H1 (cell line): ENCODE measurements at regions of chr12 and their contacts with region 1.

Region 1: GRCh38 chr12:52372216-52373154 is 5.2 kb upstream of the KRT85 start:
- DNase-seq: peak; percentile 57 to 84
- H3K4me3 ChIP-seq: no peak overlapping the region
- H3K27ac ChIP-seq: no peak overlapping the region
- H3K4me1 ChIP-seq: no peaks in the 10 kb centered on the region
- H3K27me3 ChIP-seq: no peaks in the 10 kb centered on the region
- CTCF ChIP-seq: peak; percentile 79 to 96 (median 94)
- EP300 ChIP-seq: no peak
- POLR2A ChIP-seq: no peak
- RAD21 ChIP-seq: peak; percentile 95 to 97

Region 2: GRCh38 chr12:52247228-52247892 is 125.1 kb before region 1 on chr12:
- CTCF ChIA-PET with region 1: no interaction called
- POLR2A ChIA-PET with region 1: no interaction called
- DNase-seq: no peak
- H3K4me3 ChIP-seq: no peak overlapping the region
- H3K27ac ChIP-seq: no peak overlapping the region
- H3K4me1 ChIP-seq: peaks cover 0 to 12% (median 5%) of the 10 kb centered on the region in 4 experiments; a peak in 5 of 7 replicates
- H3K27me3 ChIP-seq: peaks cover 4 to 28% (median 22%) of the 10 kb centered on the region in 4 experiments
- CTCF ChIP-seq: no peak
- EP300 ChIP-seq: no peak
- POLR2A ChIP-seq: no peak
- RAD21 ChIP-seq: no peak

Region 3: DNA sequence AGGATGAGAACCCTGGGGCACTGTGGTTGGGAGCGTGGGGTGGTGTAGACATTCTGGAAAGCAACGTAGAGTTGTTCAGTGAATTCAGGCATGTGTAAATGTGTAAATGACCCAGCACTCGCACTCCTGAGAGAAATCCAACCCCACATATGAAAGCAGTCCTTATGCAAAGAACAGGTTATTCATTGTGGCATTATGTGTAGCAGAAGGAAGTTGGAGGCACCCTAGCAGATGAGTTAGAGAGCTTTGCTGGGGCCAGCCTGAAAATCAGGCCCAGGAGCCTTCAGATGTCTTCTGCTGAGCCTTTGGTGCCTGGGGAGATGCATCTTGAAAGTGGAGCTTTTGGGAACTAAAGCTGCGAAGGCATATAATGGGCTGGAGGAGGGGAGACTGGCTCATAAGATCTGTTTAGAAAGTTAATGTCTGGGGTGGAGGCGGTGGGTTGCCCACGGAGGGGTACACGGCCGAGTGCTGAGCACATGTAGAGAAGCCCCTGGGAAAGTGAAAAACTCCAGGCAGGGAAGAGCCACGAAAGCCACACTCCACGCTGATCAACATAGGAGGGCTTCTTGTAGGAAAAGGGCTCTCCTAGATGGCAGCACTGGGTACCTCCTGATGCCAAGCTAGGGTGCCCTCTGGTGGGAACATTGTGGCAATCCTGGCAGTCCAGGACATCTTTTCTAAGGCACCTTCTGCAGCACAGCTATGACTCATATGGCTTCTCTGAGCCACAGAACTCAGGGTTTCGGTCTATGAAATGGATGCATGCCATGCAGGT is 45.2 kb before region 1 on chr12:
- CTCF ChIA-PET with region 1: interaction called, 17 read pairs
- POLR2A ChIA-PET with region 1: no interaction called
- DNase-seq: peak; percentile 67 to 75
- H3K4me3 ChIP-seq: no peak overlapping the region
- H3K27ac ChIP-seq: no peak overlapping the region
- H3K4me1 ChIP-seq: no peaks in the 10 kb centered on the region
- H3K27me3 ChIP-seq: no peaks in the 10 kb centered on the region
- CTCF ChIP-seq: peak; percentile 97 to 100 (median 100)
- EP300 ChIP-seq: no peak
- POLR2A ChIP-seq: no peak
- RAD21 ChIP-seq: peak; percentile 81 to 88

Region 4: GRCh38 chr12:52344137-52344536 is 28.3 kb before region 1 on chr12:
- CTCF ChIA-PET with region 1: interaction called, 15 read pairs
- POLR2A ChIA-PET with region 1: no interaction called
- DNase-seq: no peak
- H3K4me3 ChIP-seq: no peak overlapping the region
- H3K27ac ChIP-seq: no peak overlapping the region
- H3K4me1 ChIP-seq: no peaks in the 10 kb centered on the region
- H3K27me3 ChIP-seq: no peaks in the 10 kb centered on the region
- CTCF ChIP-seq: no peak
- EP300 ChIP-seq: no peak
- POLR2A ChIP-seq: no peak
- RAD21 ChIP-seq: no peak; a peak in 1 of 4 replicates

Region 5: DNA sequence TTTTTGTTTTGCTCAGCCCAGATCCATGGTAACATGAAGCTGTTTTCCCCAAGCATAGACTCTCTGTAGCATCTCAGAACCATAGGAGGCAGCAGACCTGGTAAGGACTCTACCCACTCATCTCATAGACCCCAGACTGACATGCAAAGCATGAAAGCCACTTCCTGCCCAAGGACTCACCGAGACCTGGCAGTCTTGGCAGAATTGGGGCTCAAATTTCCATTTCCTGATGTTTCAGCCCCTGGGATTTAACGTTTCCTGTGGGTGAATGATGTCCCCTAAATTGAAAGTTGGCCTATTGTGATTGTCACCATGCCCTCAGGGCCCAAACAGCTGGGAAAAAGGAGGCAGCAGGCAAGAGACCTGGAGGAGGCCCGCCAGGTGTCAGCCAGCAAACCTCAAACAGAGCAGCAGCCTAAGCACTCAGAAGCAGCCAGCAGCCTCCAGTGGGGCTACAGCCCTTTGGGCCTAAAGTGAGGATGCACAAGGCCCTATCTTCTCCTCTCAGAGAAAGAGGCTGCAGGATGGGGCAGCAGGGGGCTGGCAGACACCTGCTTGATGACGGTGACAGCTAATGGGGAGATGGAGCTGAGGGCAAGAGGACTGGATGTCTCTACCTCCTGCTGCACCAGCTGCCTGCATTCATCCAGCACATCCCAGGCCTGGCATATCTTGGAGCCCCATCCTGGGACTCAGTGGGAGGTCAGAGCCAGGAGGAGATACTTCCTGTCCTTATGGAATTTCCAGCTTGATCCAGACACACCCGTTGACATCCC is 13.7 kb before region 1 on chr12:
- CTCF ChIA-PET with region 1: interaction called, 63 read pairs
- POLR2A ChIA-PET with region 1: no interaction called
- DNase-seq: no peak
- H3K4me3 ChIP-seq: no peak overlapping the region
- H3K27ac ChIP-seq: no peak overlapping the region
- H3K4me1 ChIP-seq: no peaks in the 10 kb centered on the region
- H3K27me3 ChIP-seq: no peaks in the 10 kb centered on the region
- CTCF ChIP-seq: no peak
- EP300 ChIP-seq: no peak
- POLR2A ChIP-seq: no peak
- RAD21 ChIP-seq: no peak

Region 6: DNA sequence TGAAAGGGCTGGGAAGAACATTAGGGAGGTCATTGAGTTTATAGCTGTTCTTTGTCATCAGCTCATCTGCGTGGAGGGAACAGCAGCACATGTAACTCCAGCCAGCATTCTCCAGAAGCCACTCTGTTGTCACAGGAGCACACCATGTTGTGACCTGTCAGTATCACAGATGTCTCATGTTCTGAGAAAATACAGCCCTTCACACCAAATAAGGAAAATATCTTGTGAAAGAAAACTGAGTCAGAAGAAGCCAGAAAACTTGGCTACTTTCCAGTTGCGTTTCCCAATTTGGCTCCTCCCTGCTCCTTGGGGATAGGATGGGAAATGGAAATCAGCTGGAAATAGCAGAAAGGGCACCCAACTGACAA is 43.9 kb after region 1 on chr12:
- CTCF ChIA-PET with region 1: no interaction called
- POLR2A ChIA-PET with region 1: no interaction called
- DNase-seq: no peak
- H3K4me3 ChIP-seq: no peak overlapping the region
- H3K27ac ChIP-seq: no peak overlapping the region
- H3K4me1 ChIP-seq: no peaks in the 10 kb centered on the region
- H3K27me3 ChIP-seq: no peaks in the 10 kb centered on the region
- CTCF ChIP-seq: no peak
- EP300 ChIP-seq: no peak
- POLR2A ChIP-seq: no peak
- RAD21 ChIP-seq: no peak

Region 7: GRCh38 chr12:52454411-52455216 is 82.1 kb after region 1 on chr12:
- CTCF ChIA-PET with region 1: no interaction called
- POLR2A ChIA-PET with region 1: no interaction called
- DNase-seq: no peak
- H3K4me3 ChIP-seq: no peak overlapping the region; a peak in 1 of 8 replicates
- H3K27ac ChIP-seq: no peak overlapping the region
- H3K4me1 ChIP-seq: no peaks in the 10 kb centered on the region
- H3K27me3 ChIP-seq: no peaks in the 10 kb centered on the region
- CTCF ChIP-seq: no peak
- EP300 ChIP-seq: no peak
- POLR2A ChIP-seq: no peak
- RAD21 ChIP-seq: no peak

Region 8: DNA sequence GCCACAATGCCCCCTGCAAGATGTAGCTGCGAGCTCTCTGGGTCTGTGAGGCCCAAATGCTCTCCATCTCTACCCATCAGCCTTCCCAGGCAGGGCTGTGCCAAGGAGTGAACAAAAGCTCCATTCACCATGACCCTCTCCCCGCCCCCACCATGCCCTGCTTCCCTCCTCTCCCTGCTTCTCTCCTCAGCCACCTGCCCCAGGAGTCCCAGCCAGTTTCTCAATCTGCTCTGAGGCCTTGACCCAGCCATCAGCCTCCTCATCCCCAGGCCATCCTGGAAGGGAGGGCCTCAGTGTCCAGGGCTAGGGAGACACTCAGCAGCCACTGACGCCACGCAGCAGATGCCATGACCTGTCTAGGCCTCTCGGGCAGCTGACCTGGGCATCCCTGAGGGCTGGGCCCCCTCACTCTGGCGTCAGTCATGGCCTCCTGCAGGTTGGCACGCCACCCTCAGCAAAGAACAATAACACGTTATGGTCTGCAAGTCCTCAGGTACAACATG is 156.2 kb after region 1 on chr12:
- CTCF ChIA-PET with region 1: no interaction called
- POLR2A ChIA-PET with region 1: no interaction called
- DNase-seq: no peak
- H3K4me3 ChIP-seq: no peak overlapping the region
- H3K27ac ChIP-seq: no peak overlapping the region
- H3K4me1 ChIP-seq: 0 out of 7 replicates have a peak, but pooled peaks cover 0 to 1% (median 0%) of the 10 kb centered on the region in 4 experiments
- H3K27me3 ChIP-seq: no peaks in the 10 kb centered on the region; a peak in 1 of 7 replicates
- CTCF ChIP-seq: no peak
- EP300 ChIP-seq: no peak
- POLR2A ChIP-seq: no peak
- RAD21 ChIP-seq: no peak

Region 9: DNA sequence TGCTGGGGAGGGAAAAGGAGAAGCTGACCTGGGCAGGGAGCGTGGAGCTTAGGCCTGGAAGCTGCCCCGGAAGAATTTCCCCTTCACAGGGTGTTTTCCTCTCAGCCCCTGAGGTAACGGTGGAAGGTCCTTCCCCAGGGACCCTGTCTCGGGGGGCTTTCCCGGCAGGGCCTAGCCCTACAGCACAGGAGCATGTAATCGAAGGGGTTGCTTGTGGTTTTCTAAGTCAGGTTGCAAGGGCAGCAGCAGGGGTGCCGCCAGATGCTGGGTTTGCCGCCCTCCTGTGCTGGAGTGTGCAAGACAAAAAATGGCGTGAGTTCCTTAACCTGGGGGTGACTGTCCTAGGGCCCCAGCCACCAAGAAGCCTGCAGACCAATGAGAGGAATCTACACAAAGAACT is 202.8 kb after region 1 on chr12:
- CTCF ChIA-PET with region 1: interaction called, 11 read pairs
- POLR2A ChIA-PET with region 1: no interaction called
- DNase-seq: no peak
- H3K4me3 ChIP-seq: no peak overlapping the region
- H3K27ac ChIP-seq: no peak overlapping the region
- H3K4me1 ChIP-seq: no peaks in the 10 kb centered on the region
- H3K27me3 ChIP-seq: no peaks in the 10 kb centered on the region; a peak in 1 of 7 replicates
- CTCF ChIP-seq: no peak
- EP300 ChIP-seq: no peak
- POLR2A ChIP-seq: no peak
- RAD21 ChIP-seq: no peak

Region 10: GRCh38 chr12:52582971-52583456 is 210.5 kb after region 1 on chr12:
- CTCF ChIA-PET with region 1: interaction called, 22 read pairs
- POLR2A ChIA-PET with region 1: no interaction called
- DNase-seq: peak; percentile 21 to 78
- H3K4me3 ChIP-seq: no peak overlapping the region
- H3K27ac ChIP-seq: no peak overlapping the region
- H3K4me1 ChIP-seq: no peaks in the 10 kb centered on the region
- H3K27me3 ChIP-seq: no peaks in the 10 kb centered on the region; a peak in 1 of 7 replicates
- CTCF ChIP-seq: peak; percentile 58 to 90 (median 86)
- EP300 ChIP-seq: no peak
- POLR2A ChIP-seq: no peak
- RAD21 ChIP-seq: peak; percentile 90 to 92

Region 11: DNA sequence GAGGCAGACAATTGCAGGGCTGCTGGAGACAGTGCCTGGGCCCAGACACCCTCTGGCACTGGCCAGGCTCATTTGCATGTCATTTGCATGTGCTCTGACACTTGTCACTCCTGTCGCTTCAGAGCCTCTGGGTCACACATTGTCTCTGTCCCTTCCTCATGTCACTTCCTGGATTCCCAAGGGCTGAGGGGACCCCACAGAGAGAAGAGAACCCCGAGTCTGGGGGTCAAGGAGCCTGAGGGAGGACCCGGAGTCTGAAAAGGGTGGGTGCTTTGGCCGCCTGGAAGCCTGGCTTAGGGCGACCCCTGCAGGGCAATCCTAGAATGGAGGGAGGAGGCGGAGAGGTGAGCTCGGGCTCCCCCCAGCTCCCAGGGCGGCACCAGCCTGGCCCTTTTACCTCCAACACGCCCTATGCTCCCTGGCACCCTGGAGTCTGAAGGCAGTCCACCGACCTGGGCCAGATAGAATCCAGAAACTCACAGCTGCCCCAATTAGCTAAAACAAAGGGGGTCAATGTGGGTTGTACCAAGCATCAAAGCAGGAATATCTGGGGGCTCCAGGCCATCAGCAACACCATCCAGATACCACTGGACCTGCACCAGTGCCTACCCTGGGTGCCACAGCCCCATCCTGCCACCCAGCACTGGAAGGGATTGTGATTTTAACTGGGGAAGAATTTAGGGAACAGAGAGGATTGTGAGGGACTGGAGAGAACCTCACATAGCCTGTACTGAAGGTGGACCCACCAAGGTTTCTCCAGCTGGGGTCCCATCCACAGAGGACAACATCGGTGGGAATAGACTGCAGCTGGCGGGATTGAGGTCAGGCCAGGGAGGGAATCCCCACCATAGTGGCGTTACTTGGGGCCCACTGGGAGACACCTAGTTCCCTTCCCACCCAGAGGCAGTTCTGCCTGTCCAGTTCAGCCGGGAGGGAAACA is 498.1 kb after region 1 on chr12:
- CTCF ChIA-PET with region 1: interaction called, 81 read pairs
- POLR2A ChIA-PET with region 1: no interaction called
- DNase-seq: peak in 1 of 2 experiments; percentile 98
- H3K4me3 ChIP-seq: no peak overlapping the region
- H3K27ac ChIP-seq: no peak overlapping the region
- H3K4me1 ChIP-seq: no peaks in the 10 kb centered on the region; a peak in 4 of 7 replicates
- H3K27me3 ChIP-seq: peaks cover 0 to 22% (median 12%) of the 10 kb centered on the region in 4 experiments; a peak in 5 of 7 replicates
- CTCF ChIP-seq: peak; percentile 86 to 98 (median 90)
- EP300 ChIP-seq: no peak
- POLR2A ChIP-seq: no peak
- RAD21 ChIP-seq: peak; percentile 96 to 98